Esophagus muscularis mucosa (tissue), 4 donors: ENCODE measurements at regions of chr4 and their contacts with region 1.

Region 1: GRCh38 chr4:143294310-143294709 is 42.4 kb upstream of the GAB1 start:
- DNase-seq: peak; percentile 95
- H3K4me3 ChIP-seq: no peak overlapping the region
- H3K27ac ChIP-seq: peak overlapping the region; percentile 53 to 79 (median 69)
- H3K4me1 ChIP-seq: peaks cover 22 to 75% (median 70%) of the 10 kb centered on the region in 4 donors
- H3K27me3 ChIP-seq: no peaks in the 10 kb centered on the region
- CTCF ChIP-seq: no peak
- EP300 ChIP-seq: no peak
- POLR2A ChIP-seq: no peak

Region 2: GRCh38 chr4:143212566-143212965 is 81.7 kb before region 1 on chr4:
- intact Hi-C with region 1: loop called (anchors 5 kb)
- DNase-seq: no peak
- H3K4me3 ChIP-seq: no peak overlapping the region
- H3K27ac ChIP-seq: no peak overlapping the region
- H3K4me1 ChIP-seq: peaks cover 0 to 39% (median 31%) of the 10 kb centered on the region in 4 donors
- H3K27me3 ChIP-seq: no peaks in the 10 kb centered on the region
- CTCF ChIP-seq: no peak
- EP300 ChIP-seq: no peak
- POLR2A ChIP-seq: no peak

Region 3: GRCh38 chr4:143251779-143252178 is 42.5 kb before region 1 on chr4:
- intact Hi-C with region 1: loop called (anchors 5 kb)
- DNase-seq: no peak
- H3K4me3 ChIP-seq: no peak overlapping the region
- H3K27ac ChIP-seq: peak overlapping the region; percentile 24 to 67 (median 60)
- H3K4me1 ChIP-seq: peaks cover 5 to 37% (median 30%) of the 10 kb centered on the region in 4 donors
- H3K27me3 ChIP-seq: no peaks in the 10 kb centered on the region
- CTCF ChIP-seq: no peak
- EP300 ChIP-seq: no peak
- POLR2A ChIP-seq: no peak